Gastrocnemius medialis (tissue), 4 donors: ENCODE measurements at regions of chr9 and their contacts with region 1.

Region 1: DNA sequence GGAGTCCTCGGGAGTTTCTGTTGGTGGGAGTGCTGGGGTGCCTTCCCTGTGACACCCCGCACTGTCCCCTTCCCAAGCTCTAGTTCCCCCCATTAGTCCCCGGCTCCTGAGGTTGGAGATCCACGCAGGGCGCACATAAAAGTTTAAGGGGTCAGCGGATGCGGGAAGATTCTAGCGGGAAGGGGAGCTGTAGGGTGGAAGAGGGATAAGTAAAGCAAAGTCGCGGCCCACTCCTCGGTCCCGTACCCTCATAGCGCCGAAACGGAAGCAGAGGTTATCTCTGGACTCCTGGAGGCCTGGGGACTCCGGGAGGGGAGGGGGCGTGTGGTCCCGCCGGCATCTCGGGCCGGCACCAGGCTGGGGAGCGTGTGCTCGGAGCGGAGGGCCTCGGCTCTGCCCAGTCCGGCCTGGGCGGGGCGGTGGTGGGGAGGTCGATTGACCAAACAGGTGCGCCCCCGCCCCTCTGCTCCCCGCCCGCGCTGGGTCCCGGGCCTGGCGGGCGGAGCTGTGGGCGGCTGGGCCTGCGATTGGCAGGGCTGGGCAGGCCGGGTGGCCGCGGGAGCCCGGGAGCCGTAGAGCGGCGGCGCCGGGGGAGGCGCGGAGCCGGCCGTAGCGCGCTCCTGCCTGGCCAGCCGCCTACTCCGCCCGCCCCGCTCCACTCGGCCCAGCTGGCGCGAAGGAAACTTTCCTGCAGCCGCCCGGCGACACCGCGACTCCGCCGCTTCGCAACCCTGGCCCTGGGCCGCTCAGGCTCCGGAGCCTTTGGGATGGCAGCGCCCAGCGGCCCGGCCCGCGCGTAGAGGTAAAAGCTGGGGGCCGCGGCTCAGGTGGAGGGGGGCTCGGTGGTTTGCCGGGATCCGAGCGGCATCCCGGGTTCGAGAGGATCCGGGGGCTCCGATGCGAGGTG is 52.2 kb upstream of the DAB2IP start:
- DNase-seq: peak; percentile 83 to 90
- ATAC-seq: peak; percentile 55 to 68
- H3K4me3 ChIP-seq: peak overlapping the region; percentile 70 to 98 (median 76)
- H3K27ac ChIP-seq: peak overlapping the region; percentile 94 to 98 (median 96)
- H3K4me1 ChIP-seq: peaks cover 40 to 41% of the 10 kb centered on the region in 2 donors
- H3K27me3 ChIP-seq: no peaks in the 10 kb centered on the region
- CTCF ChIP-seq: peak in 1 of 5 experiments; percentile 8
- POLR2A ChIP-seq: peak; percentile 89 to 92

Region 2: DNA sequence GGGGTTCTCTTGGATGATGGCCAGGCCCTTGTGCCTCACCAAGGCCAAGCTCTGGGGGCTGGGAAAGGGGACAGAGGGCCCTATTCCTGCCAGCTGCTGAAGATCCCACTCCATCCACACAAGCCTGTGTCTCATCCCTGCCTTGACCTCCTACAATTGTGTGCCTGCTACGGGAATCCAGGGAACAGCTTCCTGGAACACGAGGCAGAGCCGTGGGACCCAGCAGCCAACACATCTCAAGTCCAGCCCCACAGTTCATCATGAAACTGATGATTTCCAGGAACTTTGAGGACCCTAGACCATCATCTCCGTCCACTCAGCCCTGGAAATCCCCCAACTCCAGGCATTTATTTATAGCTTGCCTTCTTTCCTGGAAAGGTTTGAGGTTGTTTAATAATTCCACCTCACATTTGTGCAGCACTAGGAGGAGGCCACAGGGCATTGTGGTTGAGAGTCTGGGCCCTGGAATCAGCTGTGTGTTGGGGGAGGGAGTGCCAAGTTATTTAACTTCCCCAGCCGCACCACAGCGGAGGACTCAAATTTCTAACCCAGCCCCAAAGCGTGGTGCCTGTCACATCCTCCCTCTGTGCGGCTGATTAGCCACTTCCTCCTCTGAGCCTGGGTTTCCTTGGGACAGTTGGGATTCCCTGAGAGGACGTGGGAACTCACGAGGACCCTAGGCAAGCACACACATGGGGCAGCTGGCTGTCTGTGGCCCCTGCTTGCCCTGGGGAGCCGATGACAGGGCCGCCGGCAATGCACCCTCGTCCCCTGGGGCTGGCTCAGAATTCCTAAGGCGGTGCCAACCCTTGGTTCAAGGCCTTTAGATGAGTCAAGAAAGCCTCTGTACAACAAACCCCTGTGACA is 41.4 kb before region 1 on chr9:
- in situ Hi-C with region 1: no loop called
- intact Hi-C with region 1: loop called (anchors 2 kb)
- DNase-seq: peak; percentile 84
- ATAC-seq: peak; percentile 83 to 86
- H3K4me3 ChIP-seq: peak overlapping the region in 2 of 4 donors; percentile 17 to 33
- H3K27ac ChIP-seq: peak overlapping the region; percentile 81 to 90 (median 86)
- H3K4me1 ChIP-seq: peaks cover 46 to 47% of the 10 kb centered on the region in 2 donors
- H3K27me3 ChIP-seq: no peaks in the 10 kb centered on the region
- CTCF ChIP-seq: no peak
- POLR2A ChIP-seq: peak in 1 of 2 donors; percentile 24

Region 3: GRCh38 chr9:121566481-121567465 is 32.4 kb before region 1 on chr9:
- in situ Hi-C with region 1: no loop called
- intact Hi-C with region 1: loop called (anchors 2 kb)
- DNase-seq: peak; percentile 84 to 93
- ATAC-seq: peak; percentile 83
- H3K4me3 ChIP-seq: peak overlapping the region; percentile 45 to 57 (median 52)
- H3K27ac ChIP-seq: peak overlapping the region; percentile 91 to 97 (median 96)
- H3K4me1 ChIP-seq: peaks cover 60 to 63% of the 10 kb centered on the region in 2 donors
- H3K27me3 ChIP-seq: no peaks in the 10 kb centered on the region
- CTCF ChIP-seq: no peak
- POLR2A ChIP-seq: no peak

Region 4: DNA sequence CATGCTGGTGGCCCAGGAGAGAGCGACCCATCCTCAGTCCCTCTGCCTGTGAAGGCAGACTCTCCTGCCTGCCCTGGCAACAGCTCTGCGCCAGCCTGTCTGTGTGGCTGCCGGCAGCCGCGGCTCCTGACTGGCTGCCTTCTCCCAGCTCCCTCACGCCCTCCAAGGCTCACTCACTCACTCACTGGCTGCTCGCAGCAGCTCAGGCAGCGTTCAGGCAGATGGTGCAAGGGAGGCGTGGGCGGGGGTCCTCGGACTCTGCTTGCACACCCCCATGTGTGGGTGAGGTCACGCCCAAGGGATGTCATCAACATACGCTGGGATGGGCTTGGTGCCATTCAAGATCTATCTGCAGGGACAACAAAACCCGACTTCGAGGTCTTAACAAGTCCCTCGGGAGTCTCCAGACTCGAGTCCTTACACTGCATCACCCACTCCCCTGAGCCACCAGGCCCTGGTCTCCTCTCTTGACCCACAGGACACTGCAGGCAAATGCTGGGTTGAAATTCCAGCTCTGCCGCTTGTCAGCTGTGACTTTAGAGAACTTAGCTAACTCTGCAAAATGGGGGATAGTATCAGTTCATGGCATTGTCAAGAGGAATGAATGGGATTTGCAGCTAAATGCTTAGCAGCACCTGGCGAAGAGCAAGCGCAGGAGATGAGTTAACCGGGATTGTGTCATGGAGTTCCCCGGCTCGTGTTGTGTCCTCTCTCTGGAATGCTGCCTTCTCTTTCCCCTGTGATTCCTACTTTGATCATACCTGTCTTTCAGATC is 119.1 kb after region 1 on chr9:
- in situ Hi-C with region 1: no loop called
- intact Hi-C with region 1: no loop called
- DNase-seq: no peak
- ATAC-seq: no peak
- H3K4me3 ChIP-seq: no peak overlapping the region
- H3K27ac ChIP-seq: peak overlapping the region in 2 of 4 donors; percentile 88 to 93
- H3K4me1 ChIP-seq: peaks cover 86 to 93% of the 10 kb centered on the region in 2 donors
- H3K27me3 ChIP-seq: no peaks in the 10 kb centered on the region
- CTCF ChIP-seq: no peak
- POLR2A ChIP-seq: no peak